ENCODE measurements at regions of chr17 and their contacts with region 1.

Region 1: GRCh38 chr17:65231662-65232335 is 94.6 kb downstream of the RGS9 start:
- DNase-seq: peak in 40 of 42 donors; percentile 14 to 84 (median 54)

Region 2: DNA sequence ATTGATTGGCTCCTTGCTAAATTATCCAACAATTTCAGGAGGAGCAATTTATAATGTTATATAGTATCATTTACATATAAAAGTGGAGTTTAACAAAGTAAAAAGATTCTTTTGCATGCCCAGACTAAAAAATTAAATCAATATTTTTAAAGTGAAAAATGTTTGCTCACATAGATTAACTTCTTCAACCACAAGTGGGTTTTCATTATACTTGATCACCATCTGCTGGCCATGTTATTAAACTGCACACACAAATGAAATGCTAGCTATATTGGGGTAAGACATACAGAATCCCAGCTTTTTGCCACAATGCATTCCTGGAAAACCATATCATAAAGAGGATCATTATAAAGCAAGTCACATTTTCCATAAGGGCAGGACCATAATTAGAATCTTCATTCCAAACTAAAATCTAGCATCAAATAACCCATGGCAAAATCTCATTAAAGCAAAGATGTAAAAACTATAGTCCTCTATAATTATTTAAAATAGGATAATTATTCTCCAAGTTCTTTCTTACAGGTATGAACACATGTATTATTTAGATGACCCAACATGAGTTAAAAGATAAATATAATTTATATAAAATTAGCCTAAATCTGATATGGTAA is 933.8 kb after region 1 on chr17:
- intact Hi-C with region 1: loop called (anchors 10 kb)
- DNase-seq: peak in 14 of 42 donors; percentile 14 to 69 (median 30)